ENCODE measurements at regions of chr14 and their contacts with region 1.

Region 1: GRCh38 chr14:97442363-97442762 is 645.2 kb downstream of the VRK1 start:
- DNase-seq: peak; percentile 70
- H3K4me3 Mint-ChIP-seq: peak overlapping the region; percentile 65
- H3K27ac Mint-ChIP-seq: peak overlapping the region; percentile 98
- H3K4me1 Mint-ChIP-seq: peaks cover 79% of the 10 kb centered on the region
- H3K27me3 Mint-ChIP-seq: no peaks in the 10 kb centered on the region

Region 2: GRCh38 chr14:97306760-97307246 is 135.6 kb before region 1 on chr14:
- intact Hi-C with region 1: loop called (anchors 1 kb)
- DNase-seq: no peak
- H3K4me3 Mint-ChIP-seq: no peak overlapping the region
- H3K27ac Mint-ChIP-seq: peak overlapping the region; percentile 84
- H3K4me1 Mint-ChIP-seq: peaks cover 53% of the 10 kb centered on the region
- H3K27me3 Mint-ChIP-seq: no peaks in the 10 kb centered on the region

Region 3: DNA sequence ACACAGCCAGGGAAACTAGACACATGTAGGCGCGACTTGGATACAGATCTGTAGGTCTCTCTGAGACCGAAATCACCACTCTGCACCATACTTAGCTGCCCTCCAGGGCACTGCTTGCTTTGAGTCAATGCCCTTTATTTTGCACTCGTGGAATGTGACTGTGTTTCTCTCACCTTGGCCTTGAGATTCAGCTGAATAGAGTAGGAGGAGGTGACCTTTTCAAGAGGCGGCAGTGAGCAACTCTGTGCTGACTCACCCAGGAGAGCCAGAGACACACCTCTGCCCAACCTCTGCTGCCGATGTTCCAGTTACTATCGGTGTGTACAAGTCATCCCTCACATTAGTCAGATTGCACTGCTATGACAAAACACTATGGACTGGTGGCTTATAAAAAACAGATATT is 61.8 kb before region 1 on chr14:
- intact Hi-C with region 1: loop called (anchors 1 kb)
- DNase-seq: peak; percentile 38
- H3K4me3 Mint-ChIP-seq: no peak overlapping the region
- H3K27ac Mint-ChIP-seq: peak overlapping the region; percentile 76
- H3K4me1 Mint-ChIP-seq: peaks cover 65% of the 10 kb centered on the region
- H3K27me3 Mint-ChIP-seq: no peaks in the 10 kb centered on the region

Region 4: GRCh38 chr14:97924922-97925613 is 482.7 kb after region 1 on chr14:
- intact Hi-C with region 1: loop called (anchors 1 kb)
- DNase-seq: peak; percentile 18
- H3K4me3 Mint-ChIP-seq: no peak overlapping the region
- H3K27ac Mint-ChIP-seq: peak overlapping the region; percentile 10
- H3K4me1 Mint-ChIP-seq: peaks cover 19% of the 10 kb centered on the region
- H3K27me3 Mint-ChIP-seq: peaks cover 11% of the 10 kb centered on the region

Measured in activated T-helper 2 cell treated with anti-CD3 and anti-CD28 coated beads, Interferon-gamma antibody, Interleukin-2, Interleukin-4, amounts not matched to agents 10 μg/mL and 5 μg/mL and 100 μg/mL, durations not matched to agents 14 hours and 24 hours and 36 hours (primary cell).